ENCODE measurements at regions of chr1 and their contacts with region 1.

Region 1: DNA sequence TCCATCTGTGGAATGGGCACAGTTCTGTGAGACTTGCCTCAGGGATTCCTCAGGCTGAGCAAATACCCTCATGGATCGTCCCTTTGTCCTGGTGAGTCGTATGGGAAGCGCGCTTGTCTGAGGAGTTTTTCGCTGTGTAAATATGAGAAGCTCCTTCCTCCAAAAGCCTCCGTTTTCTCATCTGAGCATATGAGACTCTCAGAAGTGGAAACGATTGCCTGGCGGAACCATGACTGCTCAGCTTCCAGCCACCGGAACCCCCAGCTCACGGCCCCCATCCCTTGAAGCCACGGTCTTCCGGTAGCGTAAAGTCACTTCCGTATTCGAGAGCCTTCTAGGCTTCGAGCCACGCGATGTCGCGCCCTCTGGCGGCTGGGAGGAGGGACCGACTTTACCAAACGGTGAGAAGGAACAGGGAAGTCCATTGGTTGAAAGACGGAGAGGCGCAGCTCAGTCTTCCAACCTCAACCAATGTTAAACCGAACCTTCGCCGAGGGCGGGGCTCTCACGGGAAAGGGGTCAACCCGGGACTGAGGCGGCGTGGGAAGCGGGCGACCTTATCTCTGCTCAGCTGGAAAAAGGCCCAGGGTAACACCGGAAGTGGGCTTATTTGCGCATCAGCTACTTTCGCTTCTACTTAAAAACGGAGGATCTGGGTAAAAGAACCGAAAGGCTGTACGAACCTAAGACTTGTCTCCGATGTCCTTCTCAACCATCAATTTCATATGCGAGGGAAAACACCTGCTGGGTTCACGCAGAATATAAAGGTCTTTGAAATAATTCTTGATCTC is 46.2 kb downstream of the AZIN2 start:
- DNase-seq: peak; percentile 99
- H3K4me3 ChIP-seq: peak overlapping the region; percentile 70
- H3K27ac ChIP-seq: peak overlapping the region; percentile 83
- H3K27me3 ChIP-seq: no peaks in the 10 kb centered on the region
- CTCF ChIP-seq: peak; percentile 92

Region 2: DNA sequence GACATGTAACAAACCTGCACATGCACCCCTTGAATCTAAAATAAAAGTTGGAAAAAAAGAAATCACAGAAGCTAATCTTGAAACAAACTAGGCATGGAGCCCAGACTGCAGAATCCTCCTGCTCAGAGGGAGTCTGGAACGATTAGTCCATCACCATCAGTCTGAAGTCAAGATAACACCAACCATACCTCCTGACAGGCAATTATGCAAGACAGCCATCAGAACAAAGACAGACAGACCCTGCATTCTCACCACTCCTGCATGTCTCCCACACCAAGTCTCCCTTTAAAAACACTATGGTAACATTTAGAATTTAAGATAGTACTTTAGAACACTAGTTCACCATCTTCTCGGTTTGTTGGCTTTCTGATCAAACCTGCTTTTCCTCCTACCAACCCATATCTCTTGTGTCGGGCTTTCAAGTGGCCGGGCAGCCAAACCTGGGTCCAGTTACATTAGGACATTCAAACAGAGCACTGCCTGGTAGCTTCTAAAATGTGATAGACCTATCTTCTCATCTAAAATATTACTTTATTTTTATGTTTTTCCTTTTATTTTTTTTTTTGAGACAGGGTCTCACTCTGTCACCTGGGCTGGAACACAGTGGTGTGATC is 320.2 kb before region 1 on chr1:
- CTCF ChIA-PET with region 1: no interaction called
- POLR2A ChIA-PET with region 1: no interaction called
- DNase-seq: no peak
- H3K4me3 ChIP-seq: no peak overlapping the region
- H3K27ac ChIP-seq: no peak overlapping the region
- H3K27me3 ChIP-seq: no peaks in the 10 kb centered on the region
- CTCF ChIP-seq: no peak

Region 3: GRCh38 chr1:33086384-33086850 is 40.8 kb before region 1 on chr1:
- CTCF ChIA-PET with region 1: interaction called, 22 read pairs
- POLR2A ChIA-PET with region 1: interaction called, 5 read pairs
- DNase-seq: peak; percentile 53
- H3K4me3 ChIP-seq: no peak overlapping the region
- H3K27ac ChIP-seq: no peak overlapping the region
- H3K27me3 ChIP-seq: no peaks in the 10 kb centered on the region
- CTCF ChIP-seq: peak; percentile 80

Region 4: GRCh38 chr1:33111970-33112369 is 15.2 kb before region 1 on chr1:
- CTCF ChIA-PET with region 1: interaction called, 39 read pairs
- POLR2A ChIA-PET with region 1: no interaction called
- DNase-seq: no peak
- H3K4me3 ChIP-seq: no peak overlapping the region
- H3K27ac ChIP-seq: no peak overlapping the region
- H3K27me3 ChIP-seq: no peaks in the 10 kb centered on the region
- CTCF ChIP-seq: peak; percentile 47; the same call in 1 of the 2 replicates

Region 5: GRCh38 chr1:33143698-33144097 is 16.5 kb after region 1 on chr1:
- CTCF ChIA-PET with region 1: interaction called, 43 read pairs
- POLR2A ChIA-PET with region 1: interaction called, 3 read pairs
- DNase-seq: peak; percentile 64
- H3K4me3 ChIP-seq: no peak overlapping the region
- H3K27ac ChIP-seq: peak overlapping the region; percentile 89
- H3K27me3 ChIP-seq: no peaks in the 10 kb centered on the region
- CTCF ChIP-seq: no peak

Region 6: GRCh38 chr1:33181921-33182341 is 54.7 kb after region 1 on chr1 and contains the start of gene TRIM62:
- CTCF ChIA-PET with region 1: interaction called, 20 read pairs
- POLR2A ChIA-PET with region 1: interaction called, 8 read pairs
- DNase-seq: peak; percentile 77
- H3K4me3 ChIP-seq: peak within 1 kb of the TSS; percentile 85
- H3K27ac ChIP-seq: peak within 1 kb of the TSS; percentile 57
- H3K27me3 ChIP-seq: no peaks in the 10 kb centered on the region
- CTCF ChIP-seq: no peak
- polyA plus RNA-seq, gene TRIM62: 4.5 and 7.2 TPM in 2 replicates

Measured in AG04450 (cell line).